ENCODE measurements at regions of chr16 and their contacts with region 1.

Region 1: GRCh38 chr16:6643080-6643686 is 689.5 kb upstream of the RBFOX1 start:
- ATAC-seq: peak in 3 of 8 experiments; percentile 26 to 34 (median 32)
- H3K4me3 ChIP-seq: no peak overlapping the region
- H3K27ac ChIP-seq: no peak overlapping the region
- H3K4me1 ChIP-seq: peaks cover 0 to 44% of the 10 kb centered on the region in 2 donors

Region 2: GRCh38 chr16:5502467-5502869 is 1140.7 kb before region 1 on chr16:
- in situ Hi-C with region 1: loop called in 3 of 9 experiments (anchors 25 kb)
- ATAC-seq: peak in 6 of 8 experiments; percentile 15 to 94 (median 89)
- H3K4me3 ChIP-seq: no peak overlapping the region
- H3K27ac ChIP-seq: peak overlapping the region in 1 of 2 donors; percentile 23
- H3K4me1 ChIP-seq: peaks cover 13 to 36% of the 10 kb centered on the region in 2 donors

Region 3: GRCh38 chr16:6428861-6429260 is 214.3 kb before region 1 on chr16:
- in situ Hi-C with region 1: no loop called
- ATAC-seq: no peak
- H3K4me3 ChIP-seq: no peak overlapping the region
- H3K27ac ChIP-seq: no peak overlapping the region
- H3K4me1 ChIP-seq: peaks cover 0 to 10% of the 10 kb centered on the region in 2 donors

Region 4: GRCh38 chr16:6926762-6927161 is 283.6 kb after region 1 on chr16:
- in situ Hi-C with region 1: no loop called
- ATAC-seq: no peak
- H3K4me3 ChIP-seq: no peak overlapping the region
- H3K27ac ChIP-seq: no peak overlapping the region
- H3K4me1 ChIP-seq: peaks cover 0 to 4% of the 10 kb centered on the region in 2 donors